ENCODE measurements at regions of chr13 and their contacts with region 1.

Region 1: DNA sequence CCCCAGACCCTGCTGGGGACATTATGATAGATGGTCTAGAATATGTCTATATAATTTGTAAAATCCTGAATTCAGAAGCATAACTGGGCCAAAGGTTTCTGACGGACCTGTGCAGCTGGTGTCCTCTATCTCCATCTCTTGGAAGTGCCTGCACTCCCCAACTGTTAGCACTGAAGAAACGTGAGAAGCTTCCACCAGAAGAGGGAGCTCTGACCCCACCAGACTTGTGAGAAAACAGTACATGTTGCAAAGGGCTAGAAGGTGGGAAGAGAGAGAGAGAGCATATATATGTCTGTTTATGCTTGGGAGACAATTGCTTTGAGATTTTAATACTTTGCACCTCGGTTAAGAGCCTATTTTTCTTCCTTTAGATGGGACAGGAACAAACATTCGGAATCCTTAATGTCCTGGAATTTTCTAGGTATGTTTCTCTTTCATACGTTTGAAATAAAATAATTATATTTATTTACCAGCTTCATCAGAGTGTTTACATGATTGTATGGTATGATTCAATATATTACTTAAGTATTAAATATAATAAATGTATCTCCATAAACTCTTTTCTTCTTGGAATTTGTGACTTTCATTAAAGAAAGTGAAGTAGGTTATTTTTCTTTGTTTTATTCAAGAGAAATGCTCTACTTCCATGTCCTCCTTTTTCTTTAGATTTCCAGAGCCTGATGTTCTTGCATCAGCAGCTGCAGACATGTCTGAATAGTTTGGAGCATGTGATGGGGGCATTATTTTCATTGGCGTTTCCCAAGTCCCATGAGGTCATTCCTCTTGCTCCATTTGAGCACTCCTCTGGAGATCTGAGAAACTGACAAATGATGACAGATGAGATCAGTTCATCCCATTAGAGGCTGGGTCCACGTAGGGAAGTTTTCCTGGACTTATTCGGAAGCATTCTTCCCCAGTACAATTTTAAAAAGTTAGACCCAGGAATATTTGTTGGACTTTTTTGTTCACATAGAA is 202.9 kb downstream of the ATP8A2 start:
- DNase-seq: peak; percentile 68
- H3K4me3 Mint-ChIP-seq: no peak overlapping the region
- H3K27ac Mint-ChIP-seq: no peak overlapping the region
- H3K4me1 Mint-ChIP-seq: peaks cover 15% of the 10 kb centered on the region
- H3K27me3 Mint-ChIP-seq: peaks cover 22% of the 10 kb centered on the region

Region 2: DNA sequence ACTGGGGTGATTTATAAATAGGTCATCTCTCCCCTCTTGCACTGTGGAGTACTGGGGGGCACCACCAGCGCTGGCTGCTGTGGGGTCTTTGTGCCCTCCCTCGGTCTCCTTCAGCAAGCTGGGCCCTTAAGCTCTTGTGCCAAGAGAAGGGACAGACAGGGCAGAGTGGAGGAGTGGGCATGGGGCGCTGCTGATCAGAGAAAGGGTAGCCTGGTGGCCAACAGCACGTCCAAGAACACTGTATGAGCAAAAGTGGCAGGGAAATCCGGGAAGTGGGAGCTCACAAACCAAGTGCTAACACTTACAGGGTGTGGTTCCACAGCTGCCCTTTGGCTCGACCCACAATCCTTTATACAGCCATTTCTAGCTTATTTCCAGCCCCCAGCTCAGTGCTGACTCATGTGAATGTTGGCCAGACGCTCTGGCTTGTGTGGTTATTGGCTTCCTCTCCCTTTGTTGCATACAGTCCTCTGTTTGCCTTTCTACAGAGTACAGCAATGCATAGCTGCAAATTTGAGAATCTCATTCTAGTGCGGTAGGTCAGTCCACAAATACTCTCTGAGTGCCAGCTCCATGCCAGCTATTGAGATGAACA is 178.3 kb after region 1 on chr13:
- intact Hi-C with region 1: loop called (anchors 2 kb)
- DNase-seq: peak; percentile 35
- H3K4me3 Mint-ChIP-seq: peak overlapping the region; percentile 35
- H3K27ac Mint-ChIP-seq: peak overlapping the region; percentile 32
- H3K4me1 Mint-ChIP-seq: peaks cover 46% of the 10 kb centered on the region
- H3K27me3 Mint-ChIP-seq: no peaks in the 10 kb centered on the region

Region 3: DNA sequence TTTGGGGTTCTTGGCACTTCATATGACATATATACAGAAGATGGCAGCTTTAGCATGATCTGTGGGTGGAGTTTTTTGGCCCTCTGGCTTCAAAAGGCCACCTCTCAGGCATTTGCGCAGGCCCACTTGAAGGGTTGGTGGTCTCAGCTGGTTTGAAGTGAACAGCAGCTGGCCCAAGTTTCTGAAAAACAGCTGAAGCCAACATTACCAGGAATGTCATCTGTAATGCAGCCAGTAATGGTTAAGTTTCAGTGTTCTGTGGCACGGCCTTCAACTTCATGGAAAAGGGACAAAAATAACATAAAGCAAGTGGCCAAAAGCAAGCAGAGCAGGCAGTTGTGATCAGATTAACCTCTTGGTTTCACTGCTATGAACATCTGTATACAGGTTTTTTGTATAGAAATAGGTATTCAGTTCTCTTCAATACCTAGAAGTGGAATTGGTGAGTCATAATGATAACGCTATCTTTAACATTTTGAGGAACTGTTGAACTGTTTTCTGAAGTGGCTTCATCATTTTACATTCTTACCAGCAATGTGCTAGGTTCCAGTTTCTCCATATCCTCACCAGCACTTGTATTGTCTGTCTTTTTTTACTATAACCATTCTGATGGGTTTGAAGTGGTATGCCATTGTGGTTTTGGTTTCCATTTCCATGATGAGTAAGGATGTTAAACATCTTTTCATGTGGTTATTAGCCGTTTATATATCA is 231.7 kb after region 1 on chr13:
- intact Hi-C with region 1: loop called (anchors 5 kb)
- DNase-seq: peak; percentile 11
- H3K4me3 Mint-ChIP-seq: peak overlapping the region; percentile 61
- H3K27ac Mint-ChIP-seq: peak overlapping the region; percentile 87
- H3K4me1 Mint-ChIP-seq: peaks cover 28% of the 10 kb centered on the region
- H3K27me3 Mint-ChIP-seq: no peaks in the 10 kb centered on the region

Region 4: DNA sequence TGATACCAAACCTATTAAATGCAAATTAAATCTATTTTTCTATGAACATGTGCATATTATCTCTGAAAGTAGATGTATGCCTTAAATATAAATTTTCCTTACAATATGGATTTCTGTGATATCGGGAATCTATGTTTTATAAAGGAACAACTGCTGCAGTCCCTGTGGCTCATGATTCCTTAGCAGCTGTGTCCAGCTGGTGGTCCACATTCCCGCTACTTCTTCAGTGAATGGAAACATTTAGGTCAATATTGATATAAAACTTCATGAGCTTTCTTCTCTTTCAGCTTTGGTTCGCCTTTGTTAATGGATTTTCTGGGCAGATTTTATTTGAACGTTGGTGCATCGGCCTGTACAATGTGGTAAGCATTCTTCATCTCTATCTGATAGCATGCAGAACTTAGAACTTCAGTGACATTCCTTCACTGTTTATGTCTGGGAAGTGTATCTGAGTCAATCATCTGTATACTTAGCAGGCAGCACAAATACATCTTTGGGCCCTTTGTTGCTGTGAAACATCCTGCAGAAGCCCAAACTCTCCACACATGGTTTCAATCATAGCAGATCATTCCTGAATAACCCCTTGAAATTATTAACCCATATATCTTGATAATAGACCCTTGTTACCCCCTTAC is 253.2 kb after region 1 on chr13:
- intact Hi-C with region 1: loop called (anchors 1 kb)
- DNase-seq: no peak
- H3K4me3 Mint-ChIP-seq: no peak overlapping the region
- H3K27ac Mint-ChIP-seq: no peak overlapping the region
- H3K4me1 Mint-ChIP-seq: no peaks in the 10 kb centered on the region
- H3K27me3 Mint-ChIP-seq: no peaks in the 10 kb centered on the region

Region 5: GRCh38 chr13:26062844-26063444 is 488.2 kb after region 1 on chr13:
- intact Hi-C with region 1: loop called (anchors 1 kb)
- DNase-seq: peak; percentile 32
- H3K4me3 Mint-ChIP-seq: no peak overlapping the region
- H3K27ac Mint-ChIP-seq: no peak overlapping the region
- H3K4me1 Mint-ChIP-seq: peaks cover 22% of the 10 kb centered on the region
- H3K27me3 Mint-ChIP-seq: peaks cover 12% of the 10 kb centered on the region

Region 6: GRCh38 chr13:26071691-26072090 is 497.0 kb after region 1 on chr13:
- intact Hi-C with region 1: loop called (anchors 1 kb)
- DNase-seq: no peak
- H3K4me3 Mint-ChIP-seq: no peak overlapping the region
- H3K27ac Mint-ChIP-seq: no peak overlapping the region
- H3K4me1 Mint-ChIP-seq: peaks cover 4% of the 10 kb centered on the region
- H3K27me3 Mint-ChIP-seq: peaks cover 18% of the 10 kb centered on the region

Region 7: GRCh38 chr13:26698392-26699196 is 1123.9 kb after region 1 on chr13:
- intact Hi-C with region 1: loop called (anchors 5 kb)
- DNase-seq: peak; percentile 68
- H3K4me3 Mint-ChIP-seq: no peak overlapping the region
- H3K27ac Mint-ChIP-seq: no peak overlapping the region
- H3K4me1 Mint-ChIP-seq: peaks cover 6% of the 10 kb centered on the region
- H3K27me3 Mint-ChIP-seq: peaks cover 6% of the 10 kb centered on the region

Measured in activated T-helper 1 cell treated with anti-CD3 and anti-CD28 coated beads, Interleukin-12 subunit alpha, Interleukin-12 subunit beta, Interleukin-2, Interleukin-4 antibody, amounts not matched to agents 30 ng/mL and 10 ng/mL and 1 ng/mL, durations not matched to agents 14 hours and 24 hours and 36 hours (primary cell).